Naive thymus-derived CD4-positive, alpha-beta T cell (primary cell): ENCODE measurements at regions of chr5 and their contacts with region 1.

Region 1: DNA sequence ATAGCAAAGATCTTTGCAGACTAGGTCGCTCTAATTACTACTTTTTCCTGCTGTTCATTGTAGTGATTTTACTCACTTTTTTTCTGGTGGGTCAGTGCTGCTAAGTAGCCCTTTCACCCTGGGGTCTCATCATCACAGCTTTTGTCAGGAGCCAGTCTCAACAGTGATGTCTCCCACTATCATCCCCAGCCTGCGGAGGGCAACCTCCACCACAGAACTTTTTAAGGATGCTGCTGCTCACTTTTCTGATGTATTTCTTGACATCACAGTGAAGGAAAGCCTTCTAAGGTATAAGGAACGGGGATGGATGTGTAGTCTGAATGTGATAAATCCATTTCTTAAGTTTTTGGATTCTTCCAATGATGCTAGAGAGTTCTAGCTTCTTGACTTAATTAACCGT is 242.5 kb upstream of the RIOK2 start:
- DNase-seq: no peak
- ATAC-seq: no peak
- H3K4me3 ChIP-seq: no peak overlapping the region
- H3K4me3 Mint-ChIP-seq: no peak overlapping the region
- H3K27ac ChIP-seq: no peak overlapping the region
- H3K27ac Mint-ChIP-seq: no peak overlapping the region
- H3K4me1 ChIP-seq: no peaks in the 10 kb centered on the region
- H3K4me1 Mint-ChIP-seq: no peaks in the 10 kb centered on the region
- H3K27me3 ChIP-seq: no peaks in the 10 kb centered on the region
- H3K27me3 Mint-ChIP-seq: peaks cover 0 to 9% (median 3%) of the 10 kb centered on the region in 5 donors

Region 2: GRCh38 chr5:98796197-98796972 is 1370.9 kb after region 1 on chr5:
- CTCF ChIA-PET with region 1: no interaction called
- POLR2A ChIA-PET with region 1: no interaction called
- intact Hi-C with region 1: loop called in 1 of 2 experiments (anchors 1 kb)
- DNase-seq: peak in 8 of 9 donors; percentile 28 to 62 (median 55)
- ATAC-seq: peak; percentile 73
- H3K4me3 ChIP-seq: no peak overlapping the region
- H3K4me3 Mint-ChIP-seq: no peak overlapping the region
- H3K27ac ChIP-seq: no peak overlapping the region
- H3K27ac Mint-ChIP-seq: peak overlapping the region in 1 of 9 donors; percentile 44
- H3K4me1 ChIP-seq: no peaks in the 10 kb centered on the region
- H3K4me1 Mint-ChIP-seq: peaks cover 0 to 20% (median 4%) of the 10 kb centered on the region in 7 donors
- H3K27me3 ChIP-seq: no peaks in the 10 kb centered on the region
- H3K27me3 Mint-ChIP-seq: peaks cover 0 to 2% (median 0%) of the 10 kb centered on the region in 5 donors